ENCODE measurements at regions of chr12 and their contacts with region 1.

Region 1: DNA sequence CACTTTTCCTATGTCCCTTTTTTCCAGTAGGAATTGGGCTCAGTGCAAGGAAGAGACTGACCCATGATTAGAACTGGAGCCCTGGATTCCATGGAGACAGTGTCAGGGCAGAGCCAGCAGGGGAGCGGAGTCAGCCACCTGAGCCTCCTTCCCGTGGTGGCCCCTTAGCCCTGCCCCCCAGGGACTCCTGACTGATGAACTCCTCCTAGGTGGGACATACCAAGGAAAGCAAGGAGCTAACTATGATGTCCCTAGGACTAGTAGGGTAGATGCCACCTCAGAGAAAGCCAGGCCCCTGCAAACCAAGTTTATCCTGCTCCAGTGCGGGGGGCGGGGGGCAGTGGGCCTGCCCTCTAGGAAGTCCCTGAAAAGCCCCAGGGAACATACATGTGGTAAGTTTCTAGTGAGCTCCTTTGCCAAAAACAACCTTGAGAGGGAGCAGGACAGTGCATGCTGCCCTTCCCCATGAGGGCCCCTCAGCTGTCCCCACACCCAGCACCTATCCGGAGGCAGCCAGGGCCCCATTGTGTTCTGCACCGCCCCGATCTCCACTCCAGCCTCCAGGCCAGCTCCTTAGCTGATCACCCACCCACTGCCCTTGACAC is 6.2 kb upstream of the COL2A1 start:
- DNase-seq: no peak
- H3K4me3 ChIP-seq: no peak overlapping the region
- H3K27ac ChIP-seq: no peak overlapping the region
- H3K4me1 ChIP-seq: no peaks in the 10 kb centered on the region
- H3K27me3 ChIP-seq: peaks cover 70% of the 10 kb centered on the region
- CTCF ChIP-seq: no peak

Region 2: DNA sequence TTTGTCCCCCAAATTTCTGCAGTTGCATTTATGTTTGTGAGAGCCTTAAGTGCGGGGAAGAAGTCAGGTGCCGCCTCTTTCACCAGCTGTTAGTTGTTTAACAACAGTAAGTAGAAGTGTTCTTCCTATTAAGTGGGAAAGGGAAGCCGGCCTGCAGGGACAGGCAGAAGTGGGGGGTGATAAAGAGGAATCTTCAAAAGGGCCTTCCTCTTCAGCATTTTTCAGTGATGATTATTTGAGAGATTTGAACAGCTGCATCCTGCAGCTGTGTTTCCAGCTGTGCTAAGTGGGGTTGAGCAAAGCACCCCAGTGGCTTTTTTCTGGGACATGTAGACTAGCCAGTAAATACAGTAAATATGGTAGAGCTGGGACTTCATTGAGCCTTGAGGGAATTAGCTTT is 1709.6 kb before region 1 on chr12:
- CTCF ChIA-PET with region 1: no interaction called
- POLR2A ChIA-PET with region 1: interaction called, 10 read pairs
- intact Hi-C with region 1: no loop called
- DNase-seq: peak; percentile 93
- H3K4me3 ChIP-seq: no peak overlapping the region
- H3K27ac ChIP-seq: peak overlapping the region; percentile 44
- H3K4me1 ChIP-seq: peaks cover 26% of the 10 kb centered on the region
- H3K27me3 ChIP-seq: no peaks in the 10 kb centered on the region
- CTCF ChIP-seq: no peak

Region 3: GRCh38 chr12:47102845-47103651 is 907.4 kb before region 1 on chr12:
- CTCF ChIA-PET with region 1: no interaction called
- POLR2A ChIA-PET with region 1: no interaction called
- intact Hi-C with region 1: no loop called
- DNase-seq: no peak
- H3K4me3 ChIP-seq: no peak overlapping the region
- H3K27ac ChIP-seq: no peak overlapping the region
- H3K4me1 ChIP-seq: no peaks in the 10 kb centered on the region
- H3K27me3 ChIP-seq: no peaks in the 10 kb centered on the region
- CTCF ChIP-seq: no peak

Region 4: DNA sequence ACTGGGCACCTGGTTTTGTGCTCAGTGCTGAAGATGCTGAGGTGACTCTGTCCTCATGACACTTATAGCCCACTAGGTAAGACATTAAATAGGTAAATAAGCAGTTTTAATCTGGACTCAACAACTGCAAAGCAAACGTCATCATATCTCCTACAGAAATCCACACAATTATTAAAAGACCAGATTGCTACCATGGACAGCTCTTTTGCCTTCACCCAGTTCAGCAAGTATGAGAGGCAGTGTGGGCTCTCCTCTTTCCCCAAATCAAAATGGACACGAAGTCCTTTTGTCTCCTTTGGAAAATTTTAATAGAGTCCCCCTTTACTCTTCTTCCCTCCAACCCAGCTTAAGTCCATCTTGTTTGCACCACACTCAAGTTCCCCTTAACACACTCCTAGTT is 475.8 kb before region 1 on chr12:
- CTCF ChIA-PET with region 1: no interaction called
- POLR2A ChIA-PET with region 1: no interaction called
- intact Hi-C with region 1: no loop called
- DNase-seq: peak; percentile 27
- H3K4me3 ChIP-seq: no peak overlapping the region
- H3K27ac ChIP-seq: no peak overlapping the region
- H3K4me1 ChIP-seq: no peaks in the 10 kb centered on the region
- H3K27me3 ChIP-seq: no peaks in the 10 kb centered on the region
- CTCF ChIP-seq: no peak

Region 5: GRCh38 chr12:47828608-47829536 is 181.6 kb before region 1 on chr12:
- CTCF ChIA-PET with region 1: no interaction called
- POLR2A ChIA-PET with region 1: no interaction called
- intact Hi-C with region 1: no loop called
- DNase-seq: peak; percentile 51
- H3K4me3 ChIP-seq: no peak overlapping the region
- H3K27ac ChIP-seq: peak overlapping the region; percentile 28
- H3K4me1 ChIP-seq: peaks cover 10% of the 10 kb centered on the region
- H3K27me3 ChIP-seq: no peaks in the 10 kb centered on the region
- CTCF ChIP-seq: no peak

Region 6: GRCh38 chr12:48037267-48037915 is 26.9 kb after region 1 on chr12:
- CTCF ChIA-PET with region 1: no interaction called
- POLR2A ChIA-PET with region 1: no interaction called
- intact Hi-C with region 1: no loop called
- DNase-seq: peak; percentile 11
- H3K4me3 ChIP-seq: no peak overlapping the region
- H3K27ac ChIP-seq: no peak overlapping the region
- H3K4me1 ChIP-seq: no peaks in the 10 kb centered on the region
- H3K27me3 ChIP-seq: no peaks in the 10 kb centered on the region
- CTCF ChIP-seq: no peak